ENCODE measurements at regions of chrX and their contacts with region 1.

Region 1: GRCh38 chrX:24693453-24694202 is at the start of gene POLA1:
- DNase-seq: peak; percentile 89
- ATAC-seq: peak; percentile 93
- H3K4me3 Mint-ChIP-seq: peak within 1 kb of the TSS; percentile 85
- H3K27ac Mint-ChIP-seq: peak within 1 kb of the TSS; percentile 88
- H3K4me1 Mint-ChIP-seq: peaks cover 24% of the 10 kb centered on the region
- H3K27me3 Mint-ChIP-seq: no peaks in the 10 kb centered on the region
- total RNA-seq, gene POLA1: 48.4 to 52.1 TPM

Region 2: GRCh38 chrX:24647257-24648058 is 46.2 kb before region 1 on chrX and contains the start of gene PCYT1B:
- CTCF ChIA-PET with region 1: no interaction called
- POLR2A ChIA-PET with region 1: no interaction called
- intact Hi-C with region 1: loop called in 1 of 2 experiments (anchors 1 kb)
- DNase-seq: peak; percentile 76
- ATAC-seq: peak; percentile 99
- H3K4me3 Mint-ChIP-seq: peak within 1 kb of the TSS; percentile 59
- H3K27ac Mint-ChIP-seq: peak within 1 kb of the TSS; percentile 69
- H3K4me1 Mint-ChIP-seq: peaks cover 22% of the 10 kb centered on the region
- H3K27me3 Mint-ChIP-seq: peaks cover 12% of the 10 kb centered on the region
- total RNA-seq, gene PCYT1B: 0.43 to 0.44 TPM

Region 3: DNA sequence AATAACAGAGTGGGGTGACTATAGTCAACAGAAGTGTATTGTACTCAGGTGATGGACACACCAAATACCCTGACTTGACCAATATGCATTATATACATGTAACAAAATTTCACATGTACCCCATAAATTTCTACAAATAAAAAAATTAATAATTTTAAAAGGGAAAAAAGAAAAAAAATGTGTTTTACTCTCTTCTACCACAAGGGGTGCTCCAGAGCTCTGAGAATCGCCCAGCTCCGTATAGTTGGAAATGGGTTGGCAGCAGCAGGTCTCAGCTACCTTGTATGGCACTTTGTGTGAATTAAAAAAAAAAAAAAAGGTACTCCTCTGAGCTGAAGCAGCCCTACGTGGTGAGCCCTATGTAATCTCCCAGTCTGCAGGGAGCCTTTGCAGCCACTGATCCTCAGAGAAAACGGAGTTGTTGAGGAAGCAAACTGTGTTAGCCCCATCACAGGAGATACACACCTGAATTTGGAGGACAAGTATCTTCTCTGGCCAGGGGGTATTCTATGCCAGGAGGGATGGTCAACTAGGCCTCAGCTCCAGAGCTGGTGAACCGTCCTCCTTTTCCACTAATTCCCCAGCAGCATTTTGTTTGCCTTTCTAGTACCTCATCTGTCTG is 17.1 kb before region 1 on chrX:
- CTCF ChIA-PET with region 1: interaction called, 17 read pairs
- POLR2A ChIA-PET with region 1: no interaction called
- intact Hi-C with region 1: loop called in 1 of 2 experiments (anchors 2 kb)
- DNase-seq: peak; percentile 20
- ATAC-seq: peak; percentile 61
- H3K4me3 Mint-ChIP-seq: no peak overlapping the region
- H3K27ac Mint-ChIP-seq: no peak overlapping the region
- H3K4me1 Mint-ChIP-seq: no peaks in the 10 kb centered on the region
- H3K27me3 Mint-ChIP-seq: peaks cover 5% of the 10 kb centered on the region

Region 4: GRCh38 chrX:24682739-24683432 is 10.7 kb before region 1 on chrX:
- CTCF ChIA-PET with region 1: no interaction called
- POLR2A ChIA-PET with region 1: no interaction called
- intact Hi-C with region 1: loop called (anchors 1 kb)
- DNase-seq: peak; percentile 64
- ATAC-seq: peak; percentile 99
- H3K4me3 Mint-ChIP-seq: no peak overlapping the region
- H3K27ac Mint-ChIP-seq: peak overlapping the region; percentile 61
- H3K4me1 Mint-ChIP-seq: peaks cover 21% of the 10 kb centered on the region
- H3K27me3 Mint-ChIP-seq: peaks cover 5% of the 10 kb centered on the region

Region 5: DNA sequence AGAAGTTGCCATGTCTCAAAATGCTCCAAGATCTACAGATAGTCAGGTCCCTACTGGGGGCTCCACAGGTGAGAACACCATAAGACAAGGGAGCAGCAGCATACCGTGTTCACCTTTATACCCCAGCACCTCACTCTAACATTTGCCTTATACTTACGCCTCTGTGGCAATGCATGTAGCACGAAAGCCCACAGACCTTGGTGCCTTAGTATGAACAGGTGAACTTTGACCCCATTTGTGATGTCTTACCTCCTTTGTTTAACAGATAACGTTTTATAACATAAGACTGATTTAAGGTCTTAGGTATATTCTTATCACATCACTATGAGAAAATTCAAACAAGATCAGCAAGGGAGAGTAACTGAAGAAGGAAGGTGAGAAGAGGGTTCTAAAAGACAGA is 193.3 kb after region 1 on chrX:
- CTCF ChIA-PET with region 1: no interaction called
- POLR2A ChIA-PET with region 1: no interaction called
- intact Hi-C with region 1: no loop called
- DNase-seq: no peak
- ATAC-seq: no peak
- H3K4me3 Mint-ChIP-seq: no peak overlapping the region
- H3K27ac Mint-ChIP-seq: no peak overlapping the region
- H3K4me1 Mint-ChIP-seq: peaks cover 1% of the 10 kb centered on the region
- H3K27me3 Mint-ChIP-seq: no peaks in the 10 kb centered on the region

Region 6: GRCh38 chrX:24899391-24899790 is 205.8 kb after region 1 on chrX:
- CTCF ChIA-PET with region 1: no interaction called
- POLR2A ChIA-PET with region 1: no interaction called
- intact Hi-C with region 1: no loop called
- DNase-seq: no peak
- ATAC-seq: no peak
- H3K4me3 Mint-ChIP-seq: no peak overlapping the region
- H3K27ac Mint-ChIP-seq: no peak overlapping the region
- H3K4me1 Mint-ChIP-seq: peaks cover 3% of the 10 kb centered on the region
- H3K27me3 Mint-ChIP-seq: no peaks in the 10 kb centered on the region

Region 7: GRCh38 chrX:25285598-25285997 is 592.0 kb after region 1 on chrX:
- CTCF ChIA-PET with region 1: no interaction called
- POLR2A ChIA-PET with region 1: no interaction called
- intact Hi-C with region 1: no loop called
- DNase-seq: no peak
- ATAC-seq: no peak
- H3K4me3 Mint-ChIP-seq: no peak overlapping the region
- H3K27ac Mint-ChIP-seq: no peak overlapping the region
- H3K4me1 Mint-ChIP-seq: no peaks in the 10 kb centered on the region
- H3K27me3 Mint-ChIP-seq: no peaks in the 10 kb centered on the region

Region 8: GRCh38 chrX:25519258-25519657 is 825.6 kb after region 1 on chrX:
- CTCF ChIA-PET with region 1: no interaction called
- POLR2A ChIA-PET with region 1: no interaction called
- intact Hi-C with region 1: no loop called
- DNase-seq: no peak
- ATAC-seq: no peak
- H3K4me3 Mint-ChIP-seq: no peak overlapping the region
- H3K27ac Mint-ChIP-seq: no peak overlapping the region
- H3K4me1 Mint-ChIP-seq: no peaks in the 10 kb centered on the region
- H3K27me3 Mint-ChIP-seq: no peaks in the 10 kb centered on the region

Measured in activated CD4-positive, alpha-beta T cell treated with anti-CD3 and anti-CD28 coated beads for 36 hours (primary cell).